Ascending aorta (tissue), 2 donors: ENCODE measurements at regions of chr6 and their contacts with region 1.

Region 1: DNA sequence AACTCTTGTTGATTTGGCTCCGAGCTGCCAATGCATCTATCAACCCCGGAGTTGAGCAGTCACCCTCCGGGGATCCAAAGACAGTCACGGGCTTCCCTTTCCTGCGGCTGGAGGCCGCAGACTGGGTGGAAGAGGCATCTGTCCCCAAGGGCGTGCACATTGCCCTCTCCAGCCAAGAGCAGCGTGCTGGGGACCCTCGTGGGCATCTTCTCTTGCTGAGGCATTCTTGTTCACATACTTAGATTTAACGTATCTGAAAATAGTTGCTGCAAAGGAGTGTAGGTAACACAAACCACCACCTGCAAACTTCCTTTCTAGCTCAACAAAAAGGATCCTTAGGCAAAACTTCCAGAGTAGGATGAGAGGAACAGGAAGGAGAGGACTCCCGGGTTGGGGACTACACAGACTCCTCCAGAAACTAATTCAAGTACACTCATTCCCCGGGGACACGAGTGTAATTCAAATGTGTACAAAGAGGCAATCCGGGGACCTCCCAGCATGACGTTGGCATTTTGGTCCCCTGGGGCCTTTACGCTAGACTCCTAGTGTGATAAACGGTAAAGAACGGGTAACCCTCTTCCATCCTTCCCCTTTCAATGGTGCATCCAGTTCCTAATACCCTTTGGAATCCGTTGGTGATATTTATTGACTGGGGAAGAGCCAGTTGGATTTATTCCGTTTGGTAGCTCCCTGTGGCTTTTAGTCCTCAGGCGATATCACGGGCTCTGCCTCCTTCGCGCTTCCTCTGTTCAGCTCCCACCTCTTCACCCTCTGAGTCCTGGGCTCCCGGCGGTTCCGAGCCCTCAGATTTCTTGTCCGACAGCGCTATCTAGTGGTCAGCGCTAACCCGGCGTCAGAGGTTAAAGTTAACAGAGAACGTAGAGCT is 2.7 kb upstream of the COL12A1 start:
- DNase-seq: peak; percentile 35 to 94
- H3K4me3 ChIP-seq: peak overlapping the region; percentile 41 to 56
- H3K27ac ChIP-seq: peak overlapping the region; percentile 64 to 68
- H3K4me1 ChIP-seq: peaks cover 7 to 19% of the 10 kb centered on the region in 2 donors
- H3K27me3 ChIP-seq: no peaks in the 10 kb centered on the region
- CTCF ChIP-seq: peak; percentile 78 to 87 (median 84)

Region 2: GRCh38 chr6:73520688-73521350 is 1687.7 kb before region 1 on chr6 and contains the start of gene EEF1A1:
- intact Hi-C with region 1: loop called (anchors 10 kb)
- DNase-seq: peak; percentile 99 to 100
- H3K4me3 ChIP-seq: peak within 1 kb of the TSS; percentile 70 to 78
- H3K27ac ChIP-seq: peak within 1 kb of the TSS; percentile 100
- H3K4me1 ChIP-seq: peaks cover 13 to 38% of the 10 kb centered on the region in 2 donors
- H3K27me3 ChIP-seq: no peaks in the 10 kb centered on the region
- CTCF ChIP-seq: peak in 1 of 3 experiments; percentile 5
- total RNA-seq, gene EEF1A1: 4,361 TPM

Region 3: DNA sequence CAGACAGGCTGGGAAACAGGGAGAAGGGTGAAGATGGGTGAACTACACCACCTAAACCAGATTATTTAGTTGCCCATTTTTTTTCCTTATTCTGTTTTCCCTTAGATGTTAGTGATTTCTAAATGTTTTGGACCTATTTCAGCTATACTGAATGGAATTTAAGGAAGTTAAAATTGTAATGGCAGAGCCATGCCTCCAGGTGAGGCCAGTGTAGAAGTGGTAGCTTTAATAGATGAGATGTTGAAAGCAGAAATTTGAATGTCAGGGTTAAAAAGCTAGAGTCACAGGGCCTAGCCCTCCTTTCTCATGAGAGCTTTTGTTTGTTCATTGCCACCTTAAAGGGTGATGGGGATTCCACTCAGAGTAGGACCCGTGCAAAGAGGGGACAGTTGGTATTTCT is 1352.2 kb before region 1 on chr6:
- intact Hi-C with region 1: loop called (anchors 2 kb)
- DNase-seq: no peak
- H3K4me3 ChIP-seq: no peak overlapping the region
- H3K27ac ChIP-seq: no peak overlapping the region
- H3K4me1 ChIP-seq: no peaks in the 10 kb centered on the region
- H3K27me3 ChIP-seq: no peaks in the 10 kb centered on the region
- CTCF ChIP-seq: no peak

Region 4: DNA sequence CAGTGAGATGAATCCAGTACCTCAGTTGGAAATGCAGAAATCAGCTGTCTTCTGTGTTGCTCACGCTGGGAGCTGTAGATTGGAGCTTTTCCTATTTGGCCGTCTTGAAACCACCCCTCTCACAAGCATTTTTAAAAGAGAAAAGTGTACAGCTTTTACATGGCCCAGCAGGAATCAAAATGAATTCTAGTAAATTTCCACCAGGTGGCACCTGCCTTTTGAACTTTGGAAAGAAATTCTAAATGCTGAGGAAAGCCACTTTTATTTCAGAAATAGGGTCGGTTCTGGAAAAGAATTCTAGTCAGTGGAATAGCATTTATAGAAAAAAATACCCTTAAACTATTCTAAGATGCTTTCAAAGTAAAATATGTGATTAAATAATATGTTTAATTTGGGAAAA is 864.7 kb before region 1 on chr6:
- intact Hi-C with region 1: loop called (anchors 5 kb)
- DNase-seq: no peak
- H3K4me3 ChIP-seq: no peak overlapping the region
- H3K27ac ChIP-seq: no peak overlapping the region
- H3K4me1 ChIP-seq: no peaks in the 10 kb centered on the region
- H3K27me3 ChIP-seq: no peaks in the 10 kb centered on the region
- CTCF ChIP-seq: peak in 1 of 3 experiments; percentile 23

Region 5: DNA sequence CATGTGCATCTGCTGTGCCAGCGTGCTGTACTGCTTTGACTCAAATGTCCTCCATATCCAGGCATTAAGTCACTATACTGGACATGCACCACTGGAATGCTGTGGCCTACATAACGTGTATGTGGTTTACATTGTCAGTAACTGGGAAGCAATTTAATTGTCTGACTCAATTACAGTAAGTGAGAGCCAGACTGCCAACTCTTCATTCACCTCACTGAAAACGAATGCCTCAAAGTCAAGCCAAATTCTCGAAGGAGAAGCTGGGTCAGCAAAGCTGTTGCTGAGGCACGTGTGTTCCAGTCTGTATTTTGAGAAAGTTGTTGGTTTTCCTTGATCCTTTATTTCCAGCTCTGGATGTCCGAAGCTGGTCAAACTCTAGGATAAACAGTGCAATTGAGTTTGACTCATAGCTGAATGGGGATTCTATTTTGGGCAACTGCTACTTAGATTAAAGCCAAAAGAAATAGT is 536.9 kb before region 1 on chr6:
- intact Hi-C with region 1: loop called (anchors 5 kb)
- DNase-seq: peak in 1 of 2 donors; percentile 69
- H3K4me3 ChIP-seq: no peak overlapping the region
- H3K27ac ChIP-seq: peak overlapping the region; percentile 32 to 56
- H3K4me1 ChIP-seq: peaks cover 0 to 4% of the 10 kb centered on the region in 2 donors
- H3K27me3 ChIP-seq: no peaks in the 10 kb centered on the region
- CTCF ChIP-seq: no peak

Region 6: GRCh38 chr6:75098709-75099108 is 109.8 kb before region 1 on chr6:
- intact Hi-C with region 1: loop called (anchors 5 kb)
- DNase-seq: peak; percentile 10 to 85
- H3K4me3 ChIP-seq: no peak overlapping the region
- H3K27ac ChIP-seq: peak overlapping the region; percentile 38 to 65
- H3K4me1 ChIP-seq: peaks cover 3 to 17% of the 10 kb centered on the region in 2 donors
- H3K27me3 ChIP-seq: no peaks in the 10 kb centered on the region
- CTCF ChIP-seq: no peak

Region 7: GRCh38 chr6:75109765-75110164 is 98.8 kb before region 1 on chr6:
- intact Hi-C with region 1: no loop called
- DNase-seq: no peak
- H3K4me3 ChIP-seq: no peak overlapping the region
- H3K27ac ChIP-seq: no peak overlapping the region
- H3K4me1 ChIP-seq: peaks cover 0 to 17% of the 10 kb centered on the region in 2 donors
- H3K27me3 ChIP-seq: no peaks in the 10 kb centered on the region
- CTCF ChIP-seq: no peak

Region 8: DNA sequence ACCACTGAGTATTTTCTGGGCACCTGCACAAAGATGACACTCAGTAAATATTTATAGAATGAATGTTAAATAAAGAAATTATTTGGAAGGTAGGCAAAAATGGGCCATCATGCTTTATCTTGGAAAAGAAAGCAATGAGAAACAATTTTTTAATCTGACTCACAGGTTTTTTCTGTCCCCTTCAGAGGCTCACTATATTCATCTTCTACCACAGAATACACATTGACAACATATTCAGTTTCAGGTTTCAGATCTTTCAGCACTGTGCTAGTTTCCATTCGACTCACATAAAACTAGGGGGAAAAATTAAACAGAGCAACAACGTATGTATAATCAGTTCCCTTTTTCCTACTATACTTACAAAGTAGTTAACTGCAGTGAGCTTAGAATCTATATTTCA is 61.0 kb before region 1 on chr6:
- intact Hi-C with region 1: no loop called
- DNase-seq: no peak
- H3K4me3 ChIP-seq: no peak overlapping the region
- H3K27ac ChIP-seq: no peak overlapping the region
- H3K4me1 ChIP-seq: peaks cover 0 to 5% of the 10 kb centered on the region in 2 donors
- H3K27me3 ChIP-seq: no peaks in the 10 kb centered on the region
- CTCF ChIP-seq: no peak